A673 (cell line): ENCODE measurements at regions of chr1 and their contacts with region 1.

Region 1: DNA sequence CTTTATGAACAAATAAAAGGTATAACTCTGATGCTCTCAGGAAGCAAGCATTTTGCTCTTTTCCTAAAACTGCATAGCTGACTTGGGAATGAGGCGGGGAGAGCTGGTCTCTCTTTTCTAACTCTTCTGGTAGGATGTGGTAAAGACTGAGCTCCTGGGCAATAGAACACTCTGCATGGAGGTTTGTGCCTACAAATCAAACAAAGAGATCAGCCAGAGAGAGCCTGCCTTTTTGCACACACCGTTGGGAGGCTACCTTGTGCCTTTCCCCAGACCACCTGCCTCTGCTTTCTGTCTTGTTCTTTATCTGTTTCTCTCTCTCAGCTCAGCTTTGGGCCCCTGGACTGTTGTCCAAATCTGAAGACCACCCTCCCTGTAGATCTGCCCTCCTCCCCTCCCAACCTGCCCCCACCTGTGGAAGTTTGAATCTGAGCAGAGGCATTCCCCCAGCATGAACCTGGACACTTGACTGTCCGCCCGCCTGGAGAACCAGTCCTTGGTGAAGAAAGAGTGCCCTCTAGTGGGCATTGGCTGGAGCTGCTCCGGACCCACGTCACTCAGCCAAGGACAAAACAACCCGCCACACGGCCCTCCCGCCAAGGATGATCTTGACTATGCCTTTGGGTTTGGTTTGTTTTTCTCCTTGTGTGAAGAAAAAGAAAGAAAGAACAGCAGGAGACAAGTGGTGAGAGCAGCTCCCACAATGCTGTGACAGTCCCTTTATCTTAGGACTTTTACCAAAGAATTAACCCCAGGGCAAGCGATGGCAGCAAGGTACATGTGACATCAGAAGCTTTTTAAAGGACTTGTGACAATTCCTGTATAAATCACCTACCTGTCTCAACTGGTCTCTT is 228.2 kb downstream of the PBX1 start:
- DNase-seq: peak; percentile 89
- H3K4me3 ChIP-seq: no peak overlapping the region
- H3K27ac ChIP-seq: no peak overlapping the region
- H3K4me1 ChIP-seq: peaks cover 29% of the 10 kb centered on the region
- H3K27me3 ChIP-seq: no peaks in the 10 kb centered on the region
- CTCF ChIP-seq: peak; percentile 93

Region 2: DNA sequence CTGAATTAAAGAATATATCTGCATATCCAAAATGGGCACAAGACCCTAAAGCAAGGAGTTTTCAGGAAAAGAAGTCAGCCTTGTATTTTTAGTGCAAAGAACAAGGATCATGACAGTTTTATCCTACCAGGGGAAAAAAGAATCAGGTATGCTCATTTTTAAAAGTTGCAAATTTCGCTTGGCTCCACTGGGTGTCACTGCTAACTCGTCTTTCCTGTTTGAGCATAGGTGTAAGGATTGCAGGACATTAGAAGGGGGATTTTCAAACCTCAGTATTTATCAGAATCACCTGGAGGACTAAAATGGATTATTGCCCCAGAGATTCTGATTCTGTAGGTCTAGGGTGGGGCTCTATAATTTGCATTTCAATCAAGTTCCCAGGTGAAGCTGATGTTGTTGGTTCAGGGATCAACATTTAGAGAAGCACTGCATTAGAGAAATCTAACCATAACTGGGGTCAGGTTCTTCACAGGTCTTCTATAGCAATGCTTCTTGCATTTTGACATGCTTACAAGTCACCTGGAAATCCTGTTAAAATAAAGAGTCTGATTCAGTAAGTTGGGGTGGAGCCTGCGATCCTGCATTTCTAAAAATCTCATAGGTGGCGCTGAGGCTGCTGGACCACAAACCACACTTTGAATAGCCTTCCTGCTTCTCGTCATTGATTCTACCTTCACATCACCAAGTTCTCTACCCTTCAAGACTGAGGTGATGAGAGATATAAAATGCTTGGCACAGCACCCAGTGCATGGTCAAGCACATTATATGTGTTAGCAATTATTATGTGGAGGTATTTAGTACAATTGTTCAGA is 1425.9 kb before region 1 on chr1:
- CTCF ChIA-PET with region 1: interaction called, 5 read pairs
- POLR2A ChIA-PET with region 1: no interaction called
- intact Hi-C with region 1: loop called (anchors 5 kb)
- DNase-seq: peak; percentile 58
- H3K4me3 ChIP-seq: no peak overlapping the region
- H3K27ac ChIP-seq: no peak overlapping the region
- H3K4me1 ChIP-seq: peaks cover 8% of the 10 kb centered on the region
- H3K27me3 ChIP-seq: no peaks in the 10 kb centered on the region
- CTCF ChIP-seq: peak; percentile 71

Region 3: GRCh38 chr1:163535807-163536206 is 1251.4 kb before region 1 on chr1:
- CTCF ChIA-PET with region 1: interaction called, 7 read pairs
- POLR2A ChIA-PET with region 1: no interaction called
- intact Hi-C with region 1: loop called (anchors 5 kb)
- DNase-seq: peak; percentile 80
- H3K4me3 ChIP-seq: no peak overlapping the region
- H3K27ac ChIP-seq: peak overlapping the region; percentile 65
- H3K4me1 ChIP-seq: peaks cover 44% of the 10 kb centered on the region
- H3K27me3 ChIP-seq: no peaks in the 10 kb centered on the region
- CTCF ChIP-seq: peak; percentile 83

Region 4: GRCh38 chr1:164155347-164155746 is 631.9 kb before region 1 on chr1:
- CTCF ChIA-PET with region 1: no interaction called
- POLR2A ChIA-PET with region 1: no interaction called
- intact Hi-C with region 1: loop called (anchors 10 kb)
- DNase-seq: peak; percentile 93
- H3K4me3 ChIP-seq: no peak overlapping the region
- H3K27ac ChIP-seq: peak overlapping the region; percentile 88
- H3K4me1 ChIP-seq: peaks cover 32% of the 10 kb centered on the region
- H3K27me3 ChIP-seq: no peaks in the 10 kb centered on the region
- CTCF ChIP-seq: no peak

Region 5: DNA sequence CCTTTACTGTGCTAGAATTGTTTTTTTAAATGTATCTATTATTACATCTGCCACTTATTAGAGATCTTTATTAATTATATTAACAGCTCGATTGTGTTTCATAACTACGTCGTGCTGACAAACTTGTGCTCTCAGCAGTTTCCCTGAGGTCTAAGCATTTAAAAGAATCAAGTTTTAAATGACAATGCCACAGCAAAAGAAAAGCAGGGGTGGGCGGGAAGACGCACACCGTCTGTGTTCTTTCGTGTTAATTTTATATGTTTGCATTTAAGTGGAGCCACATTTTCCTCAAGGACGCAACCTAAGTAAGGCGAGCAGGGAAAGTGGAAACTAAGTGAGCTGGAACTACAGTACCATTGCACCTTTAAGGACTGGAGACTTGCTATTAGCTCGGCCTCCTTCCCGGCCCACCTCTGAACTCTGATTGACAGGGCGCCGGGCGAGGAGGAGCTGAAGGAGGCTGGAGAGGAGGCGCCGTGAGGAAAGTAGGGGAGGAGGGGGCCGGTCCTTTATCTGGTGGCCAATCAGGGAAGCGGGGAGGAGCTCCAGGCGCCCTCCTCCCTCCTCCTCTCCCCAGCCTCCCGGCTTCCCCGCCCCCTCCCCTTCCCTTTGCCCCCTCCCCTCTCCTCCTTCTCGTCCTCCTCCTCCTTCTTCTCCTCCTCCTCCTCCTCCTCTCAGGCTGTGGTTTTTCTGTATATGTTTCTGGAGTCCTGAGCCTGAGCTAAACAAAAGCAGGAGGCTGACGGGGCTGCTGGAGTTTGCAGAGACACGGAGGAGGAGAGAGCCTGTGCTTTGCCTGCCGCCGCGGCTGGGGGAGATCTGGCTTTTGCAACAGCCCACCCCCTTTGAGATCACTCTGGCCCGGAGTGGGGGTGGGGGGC is 228.5 kb before region 1 on chr1 and contains the start of gene PBX1:
- CTCF ChIA-PET with region 1: no interaction called
- POLR2A ChIA-PET with region 1: interaction called, 5 read pairs
- intact Hi-C with region 1: loop called (anchors 5 kb)
- DNase-seq: peak; percentile 99
- H3K4me3 ChIP-seq: peak within 1 kb of the TSS; percentile 82
- H3K27ac ChIP-seq: peak within 1 kb of the TSS; percentile 72
- H3K4me1 ChIP-seq: peaks cover 30% of the 10 kb centered on the region
- H3K27me3 ChIP-seq: no peaks in the 10 kb centered on the region
- CTCF ChIP-seq: no peak
- total RNA-seq, gene PBX1: 51.5 and 63.0 TPM in 2 replicates

Region 6: DNA sequence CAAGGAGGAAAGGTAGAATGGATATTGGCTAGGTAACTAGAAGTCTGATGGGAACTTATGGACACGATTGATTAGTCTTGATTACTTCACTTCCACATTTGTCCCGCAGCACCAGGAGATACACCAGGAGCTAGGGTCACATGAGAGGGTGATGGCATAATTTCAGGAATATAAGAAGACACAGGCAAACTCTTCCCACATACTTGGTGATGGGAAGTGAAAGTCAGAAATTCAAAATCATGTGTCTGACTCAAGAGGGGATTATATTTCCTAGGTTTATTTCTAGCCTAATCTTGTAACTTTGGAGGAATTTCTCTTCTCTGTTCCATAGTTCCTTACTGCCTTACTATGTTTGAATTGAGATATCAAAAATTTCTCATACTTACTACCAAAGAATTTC is 43.2 kb before region 1 on chr1:
- CTCF ChIA-PET with region 1: no interaction called
- POLR2A ChIA-PET with region 1: no interaction called
- intact Hi-C with region 1: no loop called
- DNase-seq: no peak
- H3K4me3 ChIP-seq: no peak overlapping the region
- H3K27ac ChIP-seq: no peak overlapping the region
- H3K4me1 ChIP-seq: no peaks in the 10 kb centered on the region
- H3K27me3 ChIP-seq: no peaks in the 10 kb centered on the region
- CTCF ChIP-seq: no peak